Mammary epithelial cell (primary cell): ENCODE measurements at regions of chr20 and their contacts with region 1.

Region 1: GRCh38 chr20:62357187-62357667 is 9.9 kb downstream of the LAMA5 start:
- DNase-seq: peak; percentile 58
- H3K4me3 ChIP-seq: no peak overlapping the region
- H3K27ac ChIP-seq: no peak overlapping the region
- H3K4me1 ChIP-seq: peaks cover 87% of the 10 kb centered on the region
- H3K27me3 ChIP-seq: no peaks in the 10 kb centered on the region
- CTCF ChIP-seq: no peak

Region 2: DNA sequence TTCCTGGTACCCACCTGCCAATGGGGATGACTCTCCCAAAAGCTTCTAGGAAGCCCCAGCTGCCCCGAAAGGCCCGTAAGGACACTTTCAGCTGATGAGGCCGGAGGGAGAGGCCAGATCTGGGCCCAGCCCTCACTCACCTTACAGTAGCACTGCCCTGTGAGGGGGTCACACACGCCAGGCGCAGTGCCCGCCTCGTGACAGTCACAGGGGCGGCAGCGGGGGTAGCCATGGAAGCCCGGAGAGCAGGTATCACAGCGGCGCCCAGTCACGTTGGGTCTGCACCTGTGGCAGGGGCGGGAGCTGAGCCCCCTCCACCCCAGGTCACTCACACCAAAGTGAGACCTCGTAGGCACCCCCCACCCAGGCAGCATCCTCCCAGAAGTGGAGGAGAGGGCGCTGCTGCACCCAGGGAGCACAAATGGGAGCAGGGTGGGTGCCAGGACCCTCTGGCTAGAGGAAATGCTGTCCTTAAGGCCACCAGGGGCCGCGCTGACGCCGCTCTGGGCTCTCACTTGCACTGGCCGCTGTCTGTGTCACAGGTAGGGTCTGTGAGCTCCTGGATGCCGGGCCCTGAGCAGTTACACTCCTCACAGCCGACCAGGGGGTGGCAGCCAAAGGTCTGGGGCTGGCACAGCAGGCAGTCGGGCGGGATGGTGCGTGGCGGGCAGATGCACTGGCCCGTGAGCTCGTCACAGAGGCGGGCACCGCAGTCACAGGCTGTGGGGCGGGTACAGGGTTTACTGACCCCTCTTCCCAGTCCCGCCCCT is 29.3 kb before region 1 on chr20:
- CTCF ChIA-PET with region 1: no interaction called
- dilution Hi-C with region 1: loop called (anchors 5 kb)
- in situ Hi-C with region 1: no loop called
- intact Hi-C with region 1: no loop called
- DNase-seq: no peak
- H3K4me3 ChIP-seq: no peak overlapping the region
- H3K27ac ChIP-seq: no peak overlapping the region
- H3K4me1 ChIP-seq: no peaks in the 10 kb centered on the region
- H3K27me3 ChIP-seq: no peaks in the 10 kb centered on the region
- CTCF ChIP-seq: no peak